CD8-positive, alpha-beta T cell (primary cell): ENCODE measurements at regions of chr18 and their contacts with region 1.

Region 1: GRCh38 chr18:712401-713134 is at the start of gene ENOSF1:
- DNase-seq: peak; percentile 68 to 90 (median 78)
- ATAC-seq: peak; percentile 76
- H3K4me3 ChIP-seq: peak within 1 kb of the TSS; percentile 87 to 92
- H3K4me3 Mint-ChIP-seq: peak within 1 kb of the TSS; percentile 84
- H3K27ac ChIP-seq: peak within 1 kb of the TSS; percentile 83 to 96
- H3K27ac Mint-ChIP-seq: peak within 1 kb of the TSS; percentile 93
- H3K4me1 ChIP-seq: peaks cover 17% of the 10 kb centered on the region
- H3K4me1 Mint-ChIP-seq: peaks cover 32% of the 10 kb centered on the region
- H3K27me3 ChIP-seq: no peaks in the 10 kb centered on the region
- H3K27me3 Mint-ChIP-seq: no peaks in the 10 kb centered on the region
- CTCF ChIP-seq: peak; percentile 67
- total RNA-seq, gene ENOSF1: 32.2 to 39.7 TPM

Region 2: DNA sequence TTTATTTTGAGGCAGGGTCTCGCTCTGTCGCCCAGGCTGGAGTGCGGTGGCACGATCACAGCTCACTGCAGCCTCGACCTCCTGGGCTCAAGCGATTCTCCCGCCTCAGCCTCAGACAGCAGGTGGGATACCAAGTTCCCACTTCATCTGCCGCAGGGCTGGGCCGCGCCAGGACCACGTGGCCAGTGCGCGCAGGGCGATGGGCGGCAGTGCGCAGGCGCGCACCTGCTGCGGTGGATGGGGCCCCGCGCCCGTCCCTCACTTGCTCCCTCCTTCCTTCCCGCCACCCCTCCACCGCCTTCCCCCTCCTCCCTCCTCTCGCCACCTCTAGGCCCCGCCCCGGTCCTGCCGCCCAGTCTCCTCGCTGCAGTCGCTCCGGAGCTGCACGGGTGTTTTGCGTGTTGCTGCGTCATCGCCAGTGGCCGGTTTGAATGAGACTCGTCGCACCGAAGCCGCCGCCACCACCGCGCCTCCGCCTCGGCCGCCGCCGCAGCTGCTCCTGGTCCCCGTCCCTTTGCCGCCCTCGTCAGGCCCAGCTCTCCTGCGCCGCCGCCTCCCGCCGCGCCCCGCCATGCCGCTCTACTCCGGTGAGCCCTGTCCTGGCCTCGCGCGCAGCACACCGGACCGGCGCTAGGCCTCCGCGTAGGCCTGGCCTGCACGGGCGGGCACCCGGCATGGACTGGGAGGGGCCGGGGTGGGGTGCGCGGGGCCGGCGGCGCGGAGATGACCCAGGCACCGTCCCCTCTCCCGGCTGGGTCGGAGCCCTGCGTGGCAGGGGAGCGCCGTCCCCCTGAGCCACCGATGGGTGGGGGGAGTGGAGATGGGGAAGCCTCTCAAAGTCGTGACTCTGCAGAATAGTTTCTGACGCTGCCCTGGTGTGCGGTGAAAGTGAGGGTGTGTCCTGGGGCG is 554.2 kb before region 1 on chr18 and contains the start of gene USP14:
- CTCF ChIA-PET with region 1: no interaction called
- POLR2A ChIA-PET with region 1: no interaction called
- intact Hi-C with region 1: loop called (anchors 5 kb)
- DNase-seq: peak; percentile 93 to 99 (median 97)
- ATAC-seq: peak; percentile 92
- H3K4me3 ChIP-seq: peak within 1 kb of the TSS; percentile 64 to 81
- H3K4me3 Mint-ChIP-seq: peak within 1 kb of the TSS; percentile 88
- H3K27ac ChIP-seq: peak within 1 kb of the TSS; percentile 59 to 83
- H3K27ac Mint-ChIP-seq: peak within 1 kb of the TSS; percentile 95
- H3K4me1 ChIP-seq: peaks cover 22% of the 10 kb centered on the region
- H3K4me1 Mint-ChIP-seq: peaks cover 35% of the 10 kb centered on the region
- H3K27me3 ChIP-seq: no peaks in the 10 kb centered on the region
- H3K27me3 Mint-ChIP-seq: no peaks in the 10 kb centered on the region
- CTCF ChIP-seq: no peak
- total RNA-seq, gene USP14: 61.3 to 64.1 TPM

Region 3: DNA sequence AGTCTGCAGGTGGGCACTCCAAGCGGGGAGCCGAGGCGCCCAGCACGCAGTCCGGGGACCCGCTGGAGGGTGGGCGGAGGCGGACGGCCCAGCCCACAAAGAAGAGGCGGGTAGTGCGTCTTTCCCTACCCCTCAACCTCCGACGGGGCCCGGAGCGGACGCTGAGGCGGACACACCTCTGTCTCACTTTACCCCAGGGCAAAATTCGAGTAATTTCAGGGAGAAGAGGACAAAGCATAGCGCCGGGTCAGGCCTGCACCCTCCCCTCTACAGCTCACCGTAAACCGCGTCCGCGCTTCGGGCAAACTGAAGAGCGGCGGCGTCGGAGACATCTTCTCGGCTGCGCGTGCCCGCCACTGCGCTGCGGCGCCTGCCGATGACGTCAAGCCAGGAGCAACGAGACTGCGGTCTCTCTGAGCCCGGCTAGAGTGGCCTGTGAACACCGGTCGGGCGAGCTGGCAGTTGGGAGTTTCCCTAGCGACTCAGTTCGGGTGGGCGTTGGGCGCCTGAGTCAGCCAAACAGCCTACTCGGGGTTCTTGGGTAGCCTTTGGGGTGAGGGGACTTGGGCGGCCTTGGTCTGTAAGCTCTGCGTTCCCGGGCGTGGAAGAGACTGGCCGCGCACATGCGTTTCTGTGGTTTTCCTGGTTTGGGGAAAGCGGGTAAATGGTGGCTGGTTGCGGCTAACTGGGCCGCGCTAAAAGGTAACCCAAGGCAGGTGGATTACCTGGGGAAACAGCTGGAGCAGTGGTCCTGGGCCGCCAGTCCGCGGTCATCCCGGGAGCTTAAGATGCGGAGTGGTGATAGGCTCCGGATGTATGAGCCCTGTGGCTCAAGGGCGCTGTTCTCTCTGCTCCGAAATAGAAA is 444.6 kb before region 1 on chr18 and contains the start of gene THOC1:
- CTCF ChIA-PET with region 1: no interaction called
- POLR2A ChIA-PET with region 1: no interaction called
- intact Hi-C with region 1: loop called (anchors 5 kb)
- DNase-seq: peak; percentile 87 to 96 (median 95)
- ATAC-seq: peak; percentile 90
- H3K4me3 ChIP-seq: peak within 1 kb of the TSS; percentile 90 to 98
- H3K4me3 Mint-ChIP-seq: peak within 1 kb of the TSS; percentile 99
- H3K27ac ChIP-seq: peak within 1 kb of the TSS; percentile 93 to 99
- H3K27ac Mint-ChIP-seq: peak within 1 kb of the TSS; percentile 100
- H3K4me1 ChIP-seq: peaks cover 12% of the 10 kb centered on the region
- H3K4me1 Mint-ChIP-seq: peaks cover 44% of the 10 kb centered on the region
- H3K27me3 ChIP-seq: no peaks in the 10 kb centered on the region
- H3K27me3 Mint-ChIP-seq: no peaks in the 10 kb centered on the region
- CTCF ChIP-seq: no peak
- total RNA-seq, gene THOC1: 114 to 128 TPM

Region 4: DNA sequence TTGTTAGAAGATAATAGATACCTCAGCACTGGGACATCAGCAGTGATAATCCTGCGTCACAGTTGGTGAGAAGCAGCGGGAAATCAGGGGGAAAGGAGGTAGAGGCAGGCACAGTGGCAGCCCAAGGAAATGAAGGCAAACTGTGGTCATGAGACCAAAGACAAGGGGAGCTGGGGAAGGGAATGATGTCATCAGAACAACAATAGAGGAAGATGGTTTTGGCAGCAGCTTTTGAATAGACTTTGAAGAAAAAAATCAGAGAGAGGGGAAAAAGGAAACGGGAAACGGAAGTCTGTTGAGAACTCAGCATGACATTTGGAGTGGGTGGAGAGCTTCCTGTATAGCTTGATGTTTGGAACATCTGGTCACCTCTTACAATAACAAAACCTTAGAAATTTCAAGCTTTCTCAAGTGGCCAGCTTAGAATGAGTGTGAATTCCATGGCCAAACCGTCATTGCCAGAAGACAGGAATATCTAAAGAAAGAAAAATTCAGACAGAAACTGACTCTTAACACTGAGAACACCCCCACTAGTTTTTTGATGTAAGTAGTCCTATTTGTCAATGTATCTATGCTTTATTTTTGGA is 117.8 kb after region 1 on chr18:
- CTCF ChIA-PET with region 1: interaction called, 11 read pairs
- POLR2A ChIA-PET with region 1: no interaction called
- intact Hi-C with region 1: no loop called
- DNase-seq: peak in 6 of 9 experiments; percentile 19 to 85 (median 56)
- ATAC-seq: peak; percentile 81
- H3K4me3 ChIP-seq: peak overlapping the region in 1 of 2 experiments; percentile 22
- H3K4me3 Mint-ChIP-seq: peak overlapping the region; percentile 59
- H3K27ac ChIP-seq: peak overlapping the region; percentile 26 to 83
- H3K27ac Mint-ChIP-seq: peak overlapping the region; percentile 68
- H3K4me1 ChIP-seq: peaks cover 23% of the 10 kb centered on the region
- H3K4me1 Mint-ChIP-seq: peaks cover 26% of the 10 kb centered on the region
- H3K27me3 ChIP-seq: no peaks in the 10 kb centered on the region
- H3K27me3 Mint-ChIP-seq: no peaks in the 10 kb centered on the region
- CTCF ChIP-seq: no peak

Region 5: DNA sequence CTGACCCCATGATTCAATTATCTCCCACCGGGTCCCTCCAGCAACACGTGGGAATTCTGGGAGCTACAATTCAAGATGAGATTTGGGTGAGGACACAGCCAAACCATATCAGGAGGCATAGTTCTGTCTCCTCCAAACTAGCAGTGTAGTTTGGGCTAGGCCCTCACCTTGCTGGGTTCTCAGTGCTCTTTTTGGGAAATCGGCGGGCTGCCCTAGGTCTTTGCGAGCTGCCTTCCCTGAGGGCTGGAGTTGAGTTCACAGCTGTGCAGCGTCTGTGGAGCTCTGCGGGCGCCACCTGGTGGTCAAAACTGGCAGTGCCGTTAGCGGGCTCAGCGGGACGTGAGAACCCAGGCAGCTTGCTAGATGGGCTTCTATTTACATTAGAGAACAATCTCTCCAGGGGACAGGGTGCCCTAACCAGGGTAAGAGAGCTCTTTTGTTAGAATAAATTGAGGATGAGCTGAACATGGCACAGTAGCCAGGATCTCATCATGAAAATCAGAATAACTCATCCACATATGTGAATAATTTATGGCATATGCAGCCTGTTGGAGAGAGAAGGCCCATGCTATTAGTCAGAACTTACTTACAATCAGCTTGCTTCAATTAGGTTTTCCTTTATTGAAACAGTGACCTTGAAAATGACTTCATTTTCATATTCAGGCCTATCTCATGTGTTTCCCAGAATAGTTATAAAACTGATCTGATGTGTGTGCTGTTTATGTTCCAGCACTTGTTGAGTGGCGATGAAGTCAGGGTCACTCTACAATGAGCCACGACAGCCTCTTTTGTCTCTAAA is 126.9 kb after region 1 on chr18:
- CTCF ChIA-PET with region 1: interaction called, 11 read pairs
- POLR2A ChIA-PET with region 1: no interaction called
- intact Hi-C with region 1: no loop called
- DNase-seq: peak; percentile 77 to 95 (median 85)
- ATAC-seq: peak; percentile 97
- H3K4me3 ChIP-seq: no peak overlapping the region
- H3K4me3 Mint-ChIP-seq: no peak overlapping the region
- H3K27ac ChIP-seq: no peak overlapping the region
- H3K27ac Mint-ChIP-seq: no peak overlapping the region
- H3K4me1 ChIP-seq: peaks cover 4% of the 10 kb centered on the region
- H3K4me1 Mint-ChIP-seq: peaks cover 4% of the 10 kb centered on the region
- H3K27me3 ChIP-seq: no peaks in the 10 kb centered on the region
- H3K27me3 Mint-ChIP-seq: no peaks in the 10 kb centered on the region
- CTCF ChIP-seq: peak; percentile 95